HepG2 (cell line): ENCODE measurements at regions of chr6 and their contacts with region 1.

Region 1: GRCh38 chr6:89940225-89941027 is 46.2 kb downstream of the GJA10 start:
- DNase-seq: peak; percentile 81
- ATAC-seq: peak; percentile 98
- H3K4me3 ChIP-seq: peak overlapping the region in 1 of 3 experiments; percentile 15; a peak in 1 of 6 replicates
- H3K27ac ChIP-seq: no peak overlapping the region
- H3K4me1 ChIP-seq: peaks cover 20% of the 10 kb centered on the region
- H3K27me3 ChIP-seq: peaks cover 0 to 31% of the 10 kb centered on the region in 2 experiments; a peak in 3 of 5 replicates
- CTCF ChIP-seq: peak; percentile 87
- EP300 ChIP-seq: no peak
- POLR2A ChIP-seq: no peak
- RAD21 ChIP-seq: peak; percentile 82

Region 2: GRCh38 chr6:90179190-90180169 is 239.1 kb after region 1 on chr6:
- CTCF ChIA-PET with region 1: interaction called, 6 read pairs
- POLR2A ChIA-PET with region 1: no interaction called
- in situ Hi-C with region 1: loop called (anchors 10 kb)
- intact Hi-C with region 1: loop called (anchors 2 kb)
- DNase-seq: no peak
- ATAC-seq: no peak
- H3K4me3 ChIP-seq: no peak overlapping the region
- H3K27ac ChIP-seq: no peak overlapping the region
- H3K4me1 ChIP-seq: no peaks in the 10 kb centered on the region
- H3K27me3 ChIP-seq: no peaks in the 10 kb centered on the region; a peak in 1 of 5 replicates
- CTCF ChIP-seq: 0 out of 2 replicates have a peak, but pooled peaks have one; percentile 16
- EP300 ChIP-seq: no peak
- POLR2A ChIP-seq: no peak
- RAD21 ChIP-seq: no peak

Region 3: DNA sequence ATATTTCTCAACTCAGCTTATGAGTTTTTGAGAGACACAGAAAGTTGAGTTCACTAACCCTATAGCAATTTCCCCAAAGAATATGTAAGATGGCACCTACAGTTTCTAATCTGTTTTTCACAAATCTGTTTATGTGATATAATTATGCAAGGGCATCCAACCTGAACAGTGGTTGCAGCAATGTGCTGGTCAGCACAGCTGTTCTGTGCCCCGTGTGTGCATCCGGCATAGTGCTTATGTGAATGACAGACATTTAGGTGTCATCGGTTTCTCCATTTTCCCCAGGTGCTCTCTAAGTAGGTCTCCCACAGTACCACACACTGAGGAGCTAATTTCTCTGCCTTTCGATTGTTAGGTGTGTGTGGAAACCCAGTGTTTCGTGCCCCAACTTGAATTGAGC is 363.9 kb after region 1 on chr6:
- CTCF ChIA-PET with region 1: no interaction called
- POLR2A ChIA-PET with region 1: no interaction called
- in situ Hi-C with region 1: loop called (anchors 10 kb)
- intact Hi-C with region 1: no loop called
- DNase-seq: no peak
- ATAC-seq: no peak
- H3K4me3 ChIP-seq: no peak overlapping the region
- H3K27ac ChIP-seq: no peak overlapping the region
- H3K4me1 ChIP-seq: no peaks in the 10 kb centered on the region
- H3K27me3 ChIP-seq: 0 out of 5 replicates have a peak, but pooled peaks cover 0 to 3% of the 10 kb centered on the region in 2 experiments
- CTCF ChIP-seq: no peak
- EP300 ChIP-seq: no peak
- POLR2A ChIP-seq: no peak
- RAD21 ChIP-seq: no peak

Region 4: DNA sequence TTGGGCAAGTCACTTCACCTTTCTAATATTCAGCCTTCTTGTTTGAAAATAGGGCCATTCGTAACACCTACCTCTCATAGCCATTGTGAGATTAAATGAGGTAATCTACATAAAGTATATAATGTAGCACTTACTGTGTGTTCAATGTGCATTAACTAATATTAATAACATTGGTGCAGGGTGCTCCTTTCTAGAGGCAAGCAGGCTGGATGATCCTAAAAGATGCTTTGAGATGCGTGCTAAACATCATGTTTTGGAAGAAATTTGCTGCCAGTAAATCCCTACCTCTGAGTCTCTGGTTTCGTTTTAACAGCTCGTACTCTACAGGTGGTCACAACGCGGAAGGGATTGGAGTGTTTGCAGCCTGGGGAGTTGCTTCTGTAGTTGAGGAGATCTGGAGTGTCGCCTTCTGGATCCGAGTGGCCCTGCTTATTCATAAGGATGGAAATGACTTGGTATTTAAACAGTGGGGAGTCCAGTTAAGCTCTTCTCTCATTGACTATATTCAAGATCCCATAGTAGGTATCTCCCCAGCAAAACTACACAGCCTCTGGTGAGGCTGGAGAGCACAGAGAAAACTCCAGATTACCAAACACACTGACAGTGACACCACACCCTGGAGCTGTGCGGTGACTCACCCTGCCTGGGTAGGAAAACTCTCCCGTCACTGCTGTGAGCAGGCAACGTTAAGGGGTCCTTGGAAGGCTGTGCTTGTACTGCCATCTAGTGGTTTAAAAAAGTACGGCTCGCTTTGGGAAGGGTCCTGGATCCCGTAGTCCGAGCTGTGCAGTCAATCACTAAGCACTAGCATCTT is 538.6 kb after region 1 on chr6:
- CTCF ChIA-PET with region 1: interaction called, 38 read pairs
- POLR2A ChIA-PET with region 1: no interaction called
- in situ Hi-C with region 1: loop called (anchors 5 kb)
- intact Hi-C with region 1: loop called (anchors 1 kb)
- DNase-seq: peak; percentile 83
- ATAC-seq: peak; percentile 99
- H3K4me3 ChIP-seq: no peak overlapping the region
- H3K27ac ChIP-seq: no peak overlapping the region
- H3K4me1 ChIP-seq: peaks cover 4% of the 10 kb centered on the region; the same call in 1 of the 2 replicates
- H3K27me3 ChIP-seq: peaks cover 0 to 23% of the 10 kb centered on the region in 2 experiments; a peak in 2 of 5 replicates
- CTCF ChIP-seq: peak; percentile 92
- EP300 ChIP-seq: no peak
- POLR2A ChIP-seq: no peak
- RAD21 ChIP-seq: peak; percentile 86